ENCODE measurements at regions of chr9 and their contacts with region 1.

Region 1: GRCh38 chr9:9752722-9753121 is 860.1 kb downstream of the PTPRD start:
- DNase-seq: no peak
- H3K4me3 ChIP-seq: no peak overlapping the region
- H3K27ac ChIP-seq: no peak overlapping the region
- H3K4me1 ChIP-seq: peaks cover 0 to 6% of the 10 kb centered on the region in 2 donors
- H3K27me3 ChIP-seq: no peaks in the 10 kb centered on the region
- CTCF ChIP-seq: no peak

Region 2: GRCh38 chr9:9631284-9631683 is 121.4 kb before region 1 on chr9:
- intact Hi-C with region 1: loop called (anchors 10 kb)
- DNase-seq: no peak
- H3K4me3 ChIP-seq: no peak overlapping the region
- H3K27ac ChIP-seq: no peak overlapping the region
- H3K4me1 ChIP-seq: peaks cover 0 to 8% of the 10 kb centered on the region in 2 donors
- H3K27me3 ChIP-seq: no peaks in the 10 kb centered on the region
- CTCF ChIP-seq: no peak